A673 (cell line): ENCODE measurements at regions of chr9 and their contacts with region 1.

Region 1: DNA sequence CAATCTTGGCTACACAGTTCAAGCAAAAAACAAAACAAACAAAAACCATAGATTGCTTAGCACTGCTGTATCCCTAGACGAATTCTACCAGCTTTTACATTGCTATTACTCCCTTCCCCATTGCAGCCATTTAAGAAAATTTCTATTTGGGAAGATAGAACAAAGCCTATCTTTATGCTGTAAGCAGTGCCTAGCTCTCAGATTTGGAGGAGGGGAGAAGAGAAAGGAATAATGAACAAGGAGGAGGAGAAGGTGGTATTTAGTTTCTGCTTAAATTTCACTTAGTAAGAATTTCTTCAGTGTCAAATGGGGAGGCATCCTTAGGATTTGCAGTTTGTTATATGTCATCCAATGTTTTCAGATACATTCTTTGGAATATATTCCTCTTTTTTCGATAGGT is 16.2 kb upstream of the TLE1 start:
- DNase-seq: no peak
- H3K4me3 ChIP-seq: no peak overlapping the region
- H3K27ac ChIP-seq: no peak overlapping the region
- H3K4me1 ChIP-seq: no peaks in the 10 kb centered on the region
- H3K27me3 ChIP-seq: no peaks in the 10 kb centered on the region
- CTCF ChIP-seq: no peak

Region 2: GRCh38 chr9:80976403-80976802 is 729.2 kb before region 1 on chr9:
- CTCF ChIA-PET with region 1: no interaction called
- POLR2A ChIA-PET with region 1: no interaction called
- intact Hi-C with region 1: no loop called
- DNase-seq: no peak
- H3K4me3 ChIP-seq: no peak overlapping the region
- H3K27ac ChIP-seq: no peak overlapping the region
- H3K4me1 ChIP-seq: no peaks in the 10 kb centered on the region
- H3K27me3 ChIP-seq: no peaks in the 10 kb centered on the region
- CTCF ChIP-seq: no peak

Region 3: GRCh38 chr9:81716409-81716808 is 10.8 kb after region 1 on chr9:
- CTCF ChIA-PET with region 1: no interaction called
- POLR2A ChIA-PET with region 1: no interaction called
- intact Hi-C with region 1: loop called (anchors 1 kb)
- DNase-seq: no peak
- H3K4me3 ChIP-seq: no peak overlapping the region
- H3K27ac ChIP-seq: no peak overlapping the region
- H3K4me1 ChIP-seq: no peaks in the 10 kb centered on the region
- H3K27me3 ChIP-seq: no peaks in the 10 kb centered on the region
- CTCF ChIP-seq: no peak

Region 4: GRCh38 chr9:82376677-82377232 is 671.2 kb after region 1 on chr9:
- CTCF ChIA-PET with region 1: no interaction called
- POLR2A ChIA-PET with region 1: no interaction called
- intact Hi-C with region 1: no loop called
- DNase-seq: no peak
- H3K4me3 ChIP-seq: no peak overlapping the region
- H3K27ac ChIP-seq: no peak overlapping the region
- H3K4me1 ChIP-seq: no peaks in the 10 kb centered on the region
- H3K27me3 ChIP-seq: no peaks in the 10 kb centered on the region
- CTCF ChIP-seq: no peak